ENCODE measurements at regions of chr7 and their contacts with region 1.

Region 1: GRCh38 chr7:87345166-87345927 is at the start of gene CROT:
- DNase-seq: peak; percentile 82 to 96 (median 92)
- ATAC-seq: peak; percentile 96
- H3K4me3 ChIP-seq: peak within 1 kb of the TSS; percentile 75
- H3K4me3 Mint-ChIP-seq: peak within 1 kb of the TSS; percentile 93
- H3K27ac ChIP-seq: peak within 1 kb of the TSS; percentile 73 to 78
- H3K27ac Mint-ChIP-seq: peak within 1 kb of the TSS; percentile 94
- H3K4me1 ChIP-seq: peaks cover 22% of the 10 kb centered on the region
- H3K4me1 Mint-ChIP-seq: peaks cover 69% of the 10 kb centered on the region
- H3K27me3 ChIP-seq: no peaks in the 10 kb centered on the region
- H3K27me3 Mint-ChIP-seq: no peaks in the 10 kb centered on the region
- CTCF ChIP-seq: no peak
- total RNA-seq, gene CROT: 8.5 to 8.6 TPM

Region 2: GRCh38 chr7:87213811-87214210 is 131.5 kb before region 1 on chr7:
- CTCF ChIA-PET with region 1: no interaction called
- POLR2A ChIA-PET with region 1: interaction called, 20 read pairs
- intact Hi-C with region 1: loop called in 1 of 2 experiments (anchors 5 kb)
- DNase-seq: no peak
- ATAC-seq: no peak
- H3K4me3 ChIP-seq: no peak overlapping the region
- H3K4me3 Mint-ChIP-seq: peak overlapping the region; percentile 90
- H3K27ac ChIP-seq: peak overlapping the region in 1 of 2 donors; percentile 3
- H3K27ac Mint-ChIP-seq: peak overlapping the region; percentile 81
- H3K4me1 ChIP-seq: peaks cover 91% of the 10 kb centered on the region
- H3K4me1 Mint-ChIP-seq: peaks cover 92% of the 10 kb centered on the region
- H3K27me3 ChIP-seq: no peaks in the 10 kb centered on the region
- H3K27me3 Mint-ChIP-seq: no peaks in the 10 kb centered on the region
- CTCF ChIP-seq: no peak

Region 3: DNA sequence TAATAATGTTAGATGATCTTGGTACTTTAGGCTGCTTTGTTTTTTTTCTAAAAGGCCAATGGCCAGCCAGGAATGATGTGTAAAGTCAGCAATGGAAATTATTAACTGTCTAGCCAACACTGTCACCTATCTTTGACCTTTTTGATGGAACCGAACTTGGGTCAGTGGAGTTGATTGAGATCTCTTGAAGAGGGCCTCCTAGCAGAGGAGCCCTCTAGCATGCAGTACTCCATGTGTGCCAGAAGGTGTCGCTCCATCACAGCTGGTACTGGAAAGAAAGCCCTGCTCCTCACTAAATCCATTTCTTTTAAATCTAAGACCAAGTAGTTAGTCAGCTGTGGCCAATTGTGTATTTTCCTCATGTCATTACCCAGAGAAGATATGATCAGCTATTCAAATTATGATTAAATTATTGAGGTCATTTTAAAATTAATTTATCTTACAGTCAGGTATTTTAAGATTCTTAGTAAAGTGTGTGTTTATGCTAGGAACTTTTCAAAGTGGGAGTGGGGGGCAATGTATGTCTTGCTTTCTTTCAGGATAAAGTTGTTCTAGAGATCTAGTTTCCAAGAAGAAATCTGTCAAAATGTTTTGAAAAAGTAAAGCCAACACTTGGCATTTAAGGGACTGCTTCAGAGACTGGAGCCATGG is 33.0 kb before region 1 on chr7:
- CTCF ChIA-PET with region 1: interaction called, 7 read pairs
- POLR2A ChIA-PET with region 1: no interaction called
- intact Hi-C with region 1: loop called in 1 of 2 experiments (anchors 2 kb)
- DNase-seq: peak; percentile 37 to 82 (median 54)
- ATAC-seq: peak; percentile 92
- H3K4me3 ChIP-seq: no peak overlapping the region
- H3K4me3 Mint-ChIP-seq: no peak overlapping the region
- H3K27ac ChIP-seq: no peak overlapping the region
- H3K27ac Mint-ChIP-seq: no peak overlapping the region
- H3K4me1 ChIP-seq: peaks cover 5% of the 10 kb centered on the region
- H3K4me1 Mint-ChIP-seq: peaks cover 8% of the 10 kb centered on the region
- H3K27me3 ChIP-seq: no peaks in the 10 kb centered on the region
- H3K27me3 Mint-ChIP-seq: no peaks in the 10 kb centered on the region
- CTCF ChIP-seq: peak; percentile 95

Region 4: DNA sequence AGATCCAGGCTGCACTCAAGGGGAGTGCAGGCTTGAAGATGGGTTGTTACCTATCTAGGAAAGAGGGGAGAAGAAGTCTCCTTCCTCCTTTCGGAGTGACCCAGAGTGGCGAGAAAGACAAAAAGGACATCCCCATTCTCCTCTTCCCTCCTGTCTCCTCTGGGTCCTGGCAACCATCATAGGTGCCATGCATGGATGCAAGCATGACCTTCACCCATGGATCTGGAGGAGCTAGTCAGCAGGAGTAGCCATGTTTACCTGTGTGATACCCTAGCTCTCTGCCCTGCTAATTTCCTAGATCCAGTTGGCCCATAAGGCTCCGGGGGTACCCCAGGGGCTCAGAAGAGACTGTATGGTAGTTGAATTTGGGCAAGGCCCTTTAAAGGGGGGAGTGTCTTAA is 17.1 kb before region 1 on chr7:
- CTCF ChIA-PET with region 1: no interaction called
- POLR2A ChIA-PET with region 1: interaction called, 12 read pairs
- intact Hi-C with region 1: no loop called
- DNase-seq: no peak
- ATAC-seq: no peak
- H3K4me3 ChIP-seq: no peak overlapping the region
- H3K4me3 Mint-ChIP-seq: no peak overlapping the region
- H3K27ac ChIP-seq: no peak overlapping the region
- H3K27ac Mint-ChIP-seq: no peak overlapping the region
- H3K4me1 ChIP-seq: no peaks in the 10 kb centered on the region
- H3K4me1 Mint-ChIP-seq: no peaks in the 10 kb centered on the region
- H3K27me3 ChIP-seq: no peaks in the 10 kb centered on the region
- H3K27me3 Mint-ChIP-seq: no peaks in the 10 kb centered on the region
- CTCF ChIP-seq: no peak

Region 5: DNA sequence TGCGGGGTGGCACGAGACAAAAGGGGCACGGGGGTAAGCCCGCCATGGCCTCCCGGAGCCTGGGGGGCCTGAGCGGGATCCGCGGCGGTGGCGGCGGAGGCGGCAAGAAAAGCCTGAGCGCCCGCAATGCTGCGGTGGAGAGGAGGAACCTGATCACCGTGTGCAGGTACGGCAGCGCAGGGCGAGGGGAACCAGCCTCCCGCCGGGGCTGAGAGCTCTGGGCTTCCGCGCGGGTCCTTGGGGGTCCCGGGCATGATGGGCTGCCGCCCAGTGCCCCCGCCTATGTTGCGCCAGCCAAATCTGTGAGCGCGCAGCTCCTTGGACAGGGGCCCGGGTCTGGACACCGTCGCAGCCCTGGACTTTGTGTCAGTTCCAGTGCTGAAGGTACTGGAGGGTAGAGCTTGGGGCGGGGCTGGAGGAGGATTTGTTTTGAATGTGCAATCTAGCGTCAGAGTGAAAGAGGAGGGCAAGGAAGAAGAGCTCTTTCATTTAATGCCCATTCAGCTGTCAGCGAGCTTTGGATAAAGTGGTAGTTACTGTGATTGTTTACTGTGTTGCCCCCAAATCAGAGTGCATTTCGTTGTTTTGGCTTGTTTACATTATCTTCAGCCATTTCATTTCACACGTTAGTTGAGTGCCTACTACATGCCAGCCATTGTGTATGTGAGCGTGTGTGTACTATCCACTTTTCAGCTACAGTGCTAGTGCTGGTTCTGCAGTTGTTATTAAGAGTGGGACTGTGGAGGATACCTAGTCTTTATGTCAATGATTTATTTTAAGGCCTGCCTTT is 283.6 kb after region 1 on chr7:
- CTCF ChIA-PET with region 1: no interaction called
- POLR2A ChIA-PET with region 1: no interaction called
- intact Hi-C with region 1: loop called in 1 of 2 experiments (anchors 5 kb)
- DNase-seq: peak in 11 of 14 experiments; percentile 1 to 50 (median 15)
- ATAC-seq: peak; percentile 28
- H3K4me3 ChIP-seq: peak overlapping the region; percentile 69
- H3K4me3 Mint-ChIP-seq: peak overlapping the region; percentile 87
- H3K27ac ChIP-seq: no peak overlapping the region
- H3K27ac Mint-ChIP-seq: peak overlapping the region; percentile 78
- H3K4me1 ChIP-seq: peaks cover 18% of the 10 kb centered on the region
- H3K4me1 Mint-ChIP-seq: peaks cover 18% of the 10 kb centered on the region
- H3K27me3 ChIP-seq: peaks cover 8 to 11% of the 10 kb centered on the region in 2 experiments
- H3K27me3 Mint-ChIP-seq: peaks cover 16% of the 10 kb centered on the region
- CTCF ChIP-seq: no peak

Region 6: DNA sequence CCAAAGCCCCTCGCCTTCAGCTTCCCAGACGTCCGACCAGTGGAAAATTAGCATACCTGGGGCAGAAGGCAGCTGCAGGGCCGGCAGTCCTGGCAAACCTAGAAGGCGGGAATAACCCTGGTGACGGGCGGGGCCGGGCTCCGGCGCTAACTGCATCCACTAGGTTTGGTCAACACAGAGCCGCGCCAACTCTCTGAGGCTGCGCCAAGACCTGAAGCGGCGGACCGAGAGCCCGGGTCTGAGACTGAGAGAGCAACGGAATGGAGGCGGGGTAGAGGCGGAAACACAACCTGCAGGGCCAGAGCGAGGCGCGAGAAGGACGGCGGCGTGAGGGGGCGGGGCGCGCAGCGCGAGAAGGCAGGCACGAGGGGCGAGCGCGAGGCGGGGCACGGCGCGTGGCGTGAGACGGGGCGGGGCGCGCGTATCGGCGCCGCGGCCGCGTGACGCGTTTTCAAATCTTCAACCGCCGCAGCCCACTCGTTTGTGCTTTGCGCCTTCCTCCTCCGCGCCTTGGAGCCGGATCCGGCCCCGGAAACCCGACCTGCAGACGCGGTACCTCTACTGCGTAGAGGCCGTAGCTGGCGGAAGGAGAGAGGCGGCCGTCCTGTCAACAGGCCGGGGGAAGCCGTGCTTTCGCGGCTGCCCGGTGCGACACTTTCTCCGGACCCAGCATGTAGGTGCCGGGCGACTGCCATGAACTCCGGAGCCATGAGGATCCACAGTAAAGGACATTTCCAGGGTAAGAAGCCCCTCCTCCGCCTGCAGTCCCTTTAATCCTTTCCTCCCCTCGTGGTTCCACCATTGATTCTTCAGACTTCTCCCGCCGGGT is 530.9 kb after region 1 on chr7 and contains the starts of genes DBF4 and SLC25A40:
- CTCF ChIA-PET with region 1: no interaction called
- POLR2A ChIA-PET with region 1: interaction called, 6 read pairs
- intact Hi-C with region 1: loop called (anchors 5 to 10 kb)
- DNase-seq: peak; percentile 88 to 98 (median 95)
- ATAC-seq: peak; percentile 86
- H3K4me3 ChIP-seq: peak within 1 kb of the TSS; percentile 97
- H3K4me3 Mint-ChIP-seq: peak within 1 kb of the TSS; percentile 98
- H3K27ac ChIP-seq: peak within 1 kb of the TSS; percentile 84 to 94
- H3K27ac Mint-ChIP-seq: peak within 1 kb of the TSS; percentile 98
- H3K4me1 ChIP-seq: peaks cover 9% of the 10 kb centered on the region
- H3K4me1 Mint-ChIP-seq: peaks cover 63% of the 10 kb centered on the region
- H3K27me3 ChIP-seq: no peaks in the 10 kb centered on the region
- H3K27me3 Mint-ChIP-seq: no peaks in the 10 kb centered on the region
- CTCF ChIP-seq: no peak
- total RNA-seq, gene DBF4: 58.1 to 61.9 TPM
- total RNA-seq, gene SLC25A40: 9.4 to 11.1 TPM

Region 7: GRCh38 chr7:88219781-88220747 is 874.7 kb after region 1 on chr7 and contains the start of gene SRI:
- CTCF ChIA-PET with region 1: no interaction called
- POLR2A ChIA-PET with region 1: no interaction called
- intact Hi-C with region 1: loop called in 1 of 2 experiments (anchors 5 kb)
- DNase-seq: peak; percentile 83 to 96 (median 90)
- ATAC-seq: peak; percentile 97
- H3K4me3 ChIP-seq: peak within 1 kb of the TSS; percentile 74
- H3K4me3 Mint-ChIP-seq: peak within 1 kb of the TSS; percentile 99
- H3K27ac ChIP-seq: peak within 1 kb of the TSS; percentile 58 to 69
- H3K27ac Mint-ChIP-seq: peak within 1 kb of the TSS; percentile 81
- H3K4me1 ChIP-seq: peaks cover 24% of the 10 kb centered on the region
- H3K4me1 Mint-ChIP-seq: peaks cover 39% of the 10 kb centered on the region
- H3K27me3 ChIP-seq: no peaks in the 10 kb centered on the region
- H3K27me3 Mint-ChIP-seq: no peaks in the 10 kb centered on the region
- CTCF ChIP-seq: peak; percentile 96
- total RNA-seq, gene SRI: 44.3 to 45.7 TPM

Measured in CD4-positive, alpha-beta T cell (primary cell).